Activated T-helper 1 cell treated with anti-CD3 and anti-CD28 coated beads, Interleukin-12 subunit alpha, Interleukin-12 subunit beta, Interleukin-2, Interleukin-4 antibody, amounts not matched to agents 30 ng/mL and 10 ng/mL and 1 ng/mL, durations not matched to agents 14 hours and 24 hours and 36 hours (primary cell): ENCODE measurements at regions of chr22 and their contacts with region 1.

Region 1: DNA sequence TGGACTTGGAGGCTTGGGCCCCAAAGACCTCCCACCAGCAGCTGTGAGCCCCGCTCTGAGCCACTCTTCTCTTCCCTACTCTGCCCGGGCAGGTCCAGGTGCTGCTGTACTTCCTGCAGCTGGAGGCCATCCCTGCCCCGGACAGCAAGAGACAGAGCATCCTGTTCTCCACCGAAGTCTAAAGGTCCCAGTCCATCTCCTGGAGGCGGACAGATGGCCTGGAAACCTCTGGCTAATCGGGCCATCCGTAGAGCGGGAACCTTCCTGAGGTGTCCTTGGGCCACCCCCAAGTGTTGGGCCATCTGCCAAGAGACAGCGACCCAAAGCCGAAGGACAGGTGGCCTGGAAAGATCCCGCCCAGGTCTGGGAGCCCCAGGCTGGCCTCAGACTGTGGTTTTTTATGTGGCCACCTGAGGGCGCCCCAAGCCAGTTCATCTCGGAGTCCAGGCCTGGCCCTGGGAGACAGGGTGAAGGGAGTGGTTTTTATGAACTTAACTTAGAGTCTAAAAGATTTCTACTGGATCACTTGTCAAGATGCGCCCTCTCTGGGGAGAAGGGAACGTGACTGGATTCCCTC is 135.1 kb downstream of the BCR start:
- DNase-seq: peak; percentile 35
- H3K4me3 Mint-ChIP-seq: no peak overlapping the region
- H3K27ac Mint-ChIP-seq: no peak overlapping the region
- H3K4me1 Mint-ChIP-seq: no peaks in the 10 kb centered on the region
- H3K27me3 Mint-ChIP-seq: no peaks in the 10 kb centered on the region

Region 2: DNA sequence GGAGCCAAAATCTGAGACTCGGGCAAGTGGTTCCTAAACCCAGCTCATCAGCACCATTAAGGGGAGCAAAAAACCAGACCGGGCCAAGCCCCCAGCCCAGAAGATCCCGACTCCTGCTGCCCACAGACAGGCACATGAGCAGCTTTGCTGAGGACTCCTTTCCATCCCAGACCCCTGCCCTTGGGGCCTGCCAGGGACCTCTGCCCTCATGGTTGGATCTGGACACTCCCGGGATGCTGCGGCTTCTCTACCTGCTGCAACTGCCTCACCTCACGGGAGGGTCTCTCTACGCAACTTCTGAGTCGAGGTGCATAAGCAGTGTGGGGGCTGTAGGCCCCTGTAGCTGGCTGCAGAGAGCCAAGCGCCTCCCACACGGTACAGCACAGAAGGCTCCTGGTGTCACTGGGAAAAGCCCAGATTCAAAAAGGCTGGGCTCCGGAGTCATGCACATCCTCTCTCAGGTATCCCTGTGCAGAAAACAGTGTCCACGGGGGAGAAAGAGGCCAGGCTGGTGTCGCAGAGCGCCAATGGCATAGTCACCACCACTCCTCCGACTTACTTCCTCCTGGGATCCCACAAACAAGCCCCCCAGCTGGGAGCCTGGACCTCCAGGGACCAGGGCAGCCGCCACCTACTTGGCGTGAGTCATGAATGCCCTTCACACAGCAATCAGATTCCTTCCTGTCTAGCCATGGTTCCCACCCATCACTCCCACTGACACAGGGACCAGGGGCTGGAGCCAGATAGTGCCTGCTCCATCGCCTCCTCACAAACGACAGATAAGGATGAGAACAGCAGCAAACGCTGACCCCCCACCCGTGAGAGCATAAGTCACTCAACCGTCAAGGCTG is 13.0 kb before region 1 on chr22:
- intact Hi-C with region 1: no loop called
- DNase-seq: no peak
- H3K4me3 Mint-ChIP-seq: no peak overlapping the region
- H3K27ac Mint-ChIP-seq: no peak overlapping the region
- H3K4me1 Mint-ChIP-seq: no peaks in the 10 kb centered on the region
- H3K27me3 Mint-ChIP-seq: no peaks in the 10 kb centered on the region

Region 3: GRCh38 chr22:23385291-23386244 is 70.1 kb after region 1 on chr22:
- intact Hi-C with region 1: loop called (anchors 1 kb)
- DNase-seq: peak; percentile 67
- H3K4me3 Mint-ChIP-seq: no peak overlapping the region
- H3K27ac Mint-ChIP-seq: no peak overlapping the region
- H3K4me1 Mint-ChIP-seq: no peaks in the 10 kb centered on the region
- H3K27me3 Mint-ChIP-seq: peaks cover 2% of the 10 kb centered on the region